MCF 10A (cell line): ENCODE measurements at regions of chr11 and their contacts with region 1.

Region 1: DNA sequence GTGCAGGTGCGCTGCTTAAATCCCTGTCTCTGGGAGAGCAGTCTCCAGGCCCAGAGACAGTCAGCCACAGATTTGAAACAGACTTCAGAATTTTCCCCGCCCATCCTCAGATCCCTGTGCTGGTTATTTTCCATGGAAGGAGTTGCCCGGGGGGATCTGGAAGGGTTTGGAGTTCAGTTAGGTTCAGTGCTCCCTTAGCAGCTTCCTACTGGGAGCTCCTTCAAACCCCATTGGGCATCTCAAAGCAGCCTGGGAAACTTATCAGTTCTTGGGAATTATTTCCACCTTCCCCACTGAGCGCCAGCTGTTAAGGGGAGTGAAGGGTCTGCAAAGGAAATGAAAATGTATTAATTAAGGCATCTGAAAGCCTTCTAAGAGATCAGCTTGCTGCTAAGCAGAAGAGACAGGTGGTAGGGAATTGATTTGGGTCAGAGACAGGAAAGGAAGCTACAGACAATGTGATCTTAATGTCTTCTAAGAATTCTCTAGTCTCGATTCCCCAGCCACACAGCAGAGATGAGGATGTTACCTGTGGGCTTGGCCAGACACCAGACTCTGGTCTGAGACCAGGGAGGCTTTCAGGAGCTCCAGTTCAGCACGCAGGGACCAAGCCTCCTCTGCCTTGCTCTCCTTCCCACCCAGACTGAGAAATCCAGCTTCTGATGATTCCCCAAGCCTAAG is 106.2 kb upstream of the TBCEL start:
- DNase-seq: no peak
- H3K4me3 Mint-ChIP-seq: no peak overlapping the region
- H3K27ac Mint-ChIP-seq: no peak overlapping the region
- H3K4me1 Mint-ChIP-seq: no peaks in the 10 kb centered on the region
- H3K27me3 Mint-ChIP-seq: peaks cover 77% of the 10 kb centered on the region
- CTCF ChIP-seq: no peak

Region 2: DNA sequence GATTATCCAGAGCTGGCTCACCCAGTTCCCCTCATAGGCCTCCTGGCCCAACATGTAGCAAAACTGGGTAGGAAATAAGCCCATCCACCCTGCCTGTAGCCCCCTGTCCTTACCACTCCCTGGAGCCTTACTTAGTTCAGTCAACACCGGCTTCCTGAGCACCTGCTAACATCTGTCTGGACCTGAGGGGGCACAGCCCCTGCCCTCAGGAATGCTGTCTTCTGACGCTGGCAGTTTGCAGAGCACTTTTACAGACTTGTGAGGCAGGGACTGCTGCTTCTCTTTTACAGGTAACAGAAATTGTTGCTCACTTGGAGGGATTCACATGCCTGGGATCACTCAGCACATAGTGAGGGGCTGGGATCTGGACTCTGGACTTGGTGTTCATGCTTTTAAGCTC is 45.8 kb before region 1 on chr11:
- CTCF ChIA-PET with region 1: no interaction called
- POLR2A ChIA-PET with region 1: no interaction called
- intact Hi-C with region 1: no loop called
- DNase-seq: no peak
- H3K4me3 Mint-ChIP-seq: no peak overlapping the region
- H3K27ac Mint-ChIP-seq: no peak overlapping the region
- H3K4me1 Mint-ChIP-seq: no peaks in the 10 kb centered on the region
- H3K27me3 Mint-ChIP-seq: peaks cover 90% of the 10 kb centered on the region
- CTCF ChIP-seq: no peak

Region 3: GRCh38 chr11:120929664-120930154 is 12.0 kb after region 1 on chr11:
- CTCF ChIA-PET with region 1: interaction called, 14 read pairs
- POLR2A ChIA-PET with region 1: interaction called, 3 read pairs
- intact Hi-C with region 1: no loop called
- DNase-seq: peak; percentile 62
- H3K4me3 Mint-ChIP-seq: no peak overlapping the region
- H3K27ac Mint-ChIP-seq: no peak overlapping the region
- H3K4me1 Mint-ChIP-seq: no peaks in the 10 kb centered on the region
- H3K27me3 Mint-ChIP-seq: peaks cover 5% of the 10 kb centered on the region
- CTCF ChIP-seq: peak; percentile 52

Region 4: DNA sequence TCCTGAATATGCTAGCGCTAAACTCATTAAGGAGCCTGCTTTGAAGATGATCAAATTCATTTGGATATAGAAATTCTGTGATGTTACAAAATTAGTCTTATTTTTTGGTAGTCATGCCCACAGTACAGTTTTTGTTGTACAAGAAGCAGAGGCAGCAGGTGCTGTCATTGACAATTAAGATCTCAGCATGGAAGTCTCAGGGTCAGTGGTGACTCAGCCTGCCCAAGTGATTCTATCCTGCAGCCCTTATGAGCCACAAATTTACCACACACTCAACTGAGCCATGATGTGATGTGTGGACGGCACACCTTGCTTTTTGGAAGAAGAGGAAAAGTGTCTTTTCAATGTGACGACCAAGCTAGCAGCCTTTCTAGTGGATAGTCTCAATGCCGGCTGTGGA is 688.7 kb after region 1 on chr11:
- CTCF ChIA-PET with region 1: no interaction called
- POLR2A ChIA-PET with region 1: no interaction called
- intact Hi-C with region 1: no loop called
- DNase-seq: no peak
- H3K4me3 Mint-ChIP-seq: no peak overlapping the region
- H3K27ac Mint-ChIP-seq: no peak overlapping the region
- H3K4me1 Mint-ChIP-seq: no peaks in the 10 kb centered on the region
- H3K27me3 Mint-ChIP-seq: no peaks in the 10 kb centered on the region
- CTCF ChIP-seq: no peak